SK-N-SH (cell line): ENCODE measurements at regions of chr7 and their contacts with region 1.

Region 1: GRCh38 chr7:157690833-157691585 is 354.2 kb downstream of the DNAJB6 start:
- DNase-seq: peak; percentile 99
- H3K4me3 ChIP-seq: peak overlapping the region; percentile 86 to 96; a peak in 2 of 4 replicates
- H3K27ac ChIP-seq: peak overlapping the region in 1 of 2 experiments; percentile 89; a peak in 2 of 4 replicates
- H3K4me1 ChIP-seq: peaks cover 0 to 17% of the 10 kb centered on the region in 2 experiments; a peak in 1 of 4 replicates
- H3K27me3 ChIP-seq: no peaks in the 10 kb centered on the region
- CTCF ChIP-seq: no peak
- EP300 ChIP-seq: no peak
- RAD21 ChIP-seq: no peak

Region 2: GRCh38 chr7:157679607-157680006 is 11.4 kb before region 1 on chr7:
- CTCF ChIA-PET with region 1: interaction called, 5 read pairs
- POLR2A ChIA-PET with region 1: interaction called, 10 read pairs
- DNase-seq: peak; percentile 30
- H3K4me3 ChIP-seq: no peak overlapping the region
- H3K27ac ChIP-seq: no peak overlapping the region
- H3K4me1 ChIP-seq: peaks cover 0 to 9% of the 10 kb centered on the region in 2 experiments; a peak in 2 of 4 replicates
- H3K27me3 ChIP-seq: no peaks in the 10 kb centered on the region
- CTCF ChIP-seq: no peak
- EP300 ChIP-seq: no peak
- RAD21 ChIP-seq: no peak

Region 3: DNA sequence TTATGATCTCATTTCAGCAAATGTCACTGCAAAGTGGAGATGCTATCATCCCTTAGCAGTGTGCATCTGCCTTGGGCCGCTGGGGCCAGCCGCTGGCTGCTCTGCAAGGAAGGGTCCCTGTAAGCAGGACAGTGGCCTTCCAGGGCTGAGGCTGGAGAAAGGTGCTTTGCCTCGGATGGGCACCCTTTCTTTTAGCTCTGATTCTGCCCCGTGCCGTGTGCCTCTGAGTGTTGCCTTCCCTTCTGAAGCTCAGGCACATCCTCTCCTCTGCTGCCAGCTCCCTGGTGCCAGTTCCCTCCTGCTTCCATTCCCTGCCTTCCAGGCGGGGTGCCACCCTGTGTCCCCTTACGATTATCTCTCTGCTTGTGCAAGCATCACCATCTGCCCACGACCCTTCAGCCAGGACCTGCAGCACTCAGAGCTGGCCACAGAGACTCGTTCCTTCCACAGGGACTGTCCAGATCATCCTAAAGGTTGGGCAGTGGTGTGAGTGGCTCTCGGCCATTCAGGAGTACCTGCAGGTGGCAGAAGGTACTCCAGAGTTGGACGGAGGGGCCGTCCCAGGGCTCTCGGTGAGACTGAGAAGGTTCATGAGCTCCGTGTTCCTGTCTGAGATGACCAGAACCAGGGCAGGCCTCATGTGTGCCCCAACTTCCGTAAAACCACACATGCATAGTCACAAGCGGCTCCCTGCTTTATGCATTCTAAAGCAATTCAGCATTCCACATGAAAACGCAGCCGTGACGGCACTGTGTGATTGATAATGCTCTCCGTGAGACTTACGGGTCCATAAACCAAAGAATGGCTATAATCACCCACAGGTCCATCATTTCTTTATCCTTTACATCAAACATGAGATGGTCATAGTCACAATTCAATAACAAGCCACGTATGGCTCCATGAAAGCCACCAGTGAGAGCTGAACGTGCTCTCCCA is 17.2 kb after region 1 on chr7:
- CTCF ChIA-PET with region 1: interaction called, 10 read pairs
- POLR2A ChIA-PET with region 1: interaction called, 5 read pairs
- DNase-seq: peak; percentile 80
- H3K4me3 ChIP-seq: no peak overlapping the region
- H3K27ac ChIP-seq: no peak overlapping the region; a peak in 1 of 4 replicates
- H3K4me1 ChIP-seq: peaks cover 0 to 18% of the 10 kb centered on the region in 2 experiments; a peak in 1 of 4 replicates
- H3K27me3 ChIP-seq: no peaks in the 10 kb centered on the region
- CTCF ChIP-seq: no peak
- EP300 ChIP-seq: no peak
- RAD21 ChIP-seq: no peak; the same call in 1 of the 2 replicates

Region 4: DNA sequence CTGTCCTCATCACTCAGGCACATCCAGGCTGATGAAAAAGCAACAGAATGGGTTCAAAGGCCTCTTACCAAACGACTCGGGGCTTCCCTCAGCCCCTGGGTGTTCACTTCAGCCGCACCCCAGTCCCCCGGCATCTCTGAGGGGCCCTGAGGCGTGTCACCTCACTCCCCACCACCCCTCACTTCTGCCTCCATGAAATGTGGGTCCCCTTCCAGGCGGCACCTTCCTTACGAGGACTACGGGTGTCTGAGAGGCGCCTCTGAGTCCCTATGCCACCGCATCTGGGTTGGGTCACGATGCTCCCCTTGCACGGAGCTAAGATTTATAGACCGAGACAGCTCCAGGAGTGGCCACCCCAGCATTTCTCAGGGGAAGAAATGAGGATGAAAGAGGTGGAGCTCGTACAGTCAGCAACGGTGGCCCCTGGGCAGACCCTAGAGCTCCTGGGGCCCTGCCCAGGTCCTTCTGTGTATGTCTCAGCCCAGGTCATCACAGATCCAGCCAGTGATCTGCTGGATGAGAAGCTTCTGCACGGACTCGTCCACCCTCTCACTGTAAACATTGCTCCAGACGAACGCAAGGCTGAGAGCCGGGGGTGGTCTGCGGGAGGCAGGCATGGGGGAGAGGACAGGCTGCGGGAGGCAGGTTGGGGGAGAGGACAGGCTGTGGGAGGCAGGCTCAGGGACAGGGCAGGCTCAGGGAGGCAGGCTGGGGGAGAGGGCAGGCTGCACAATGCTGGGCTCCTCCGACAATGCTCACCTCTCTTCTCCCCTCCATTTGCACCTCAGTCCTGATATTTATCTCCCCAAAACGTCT is 54.0 kb after region 1 on chr7:
- CTCF ChIA-PET with region 1: no interaction called
- POLR2A ChIA-PET with region 1: no interaction called
- DNase-seq: no peak
- H3K4me3 ChIP-seq: no peak overlapping the region
- H3K27ac ChIP-seq: no peak overlapping the region
- H3K4me1 ChIP-seq: no peaks in the 10 kb centered on the region
- H3K27me3 ChIP-seq: no peaks in the 10 kb centered on the region
- CTCF ChIP-seq: no peak
- EP300 ChIP-seq: no peak
- RAD21 ChIP-seq: no peak

Region 5: DNA sequence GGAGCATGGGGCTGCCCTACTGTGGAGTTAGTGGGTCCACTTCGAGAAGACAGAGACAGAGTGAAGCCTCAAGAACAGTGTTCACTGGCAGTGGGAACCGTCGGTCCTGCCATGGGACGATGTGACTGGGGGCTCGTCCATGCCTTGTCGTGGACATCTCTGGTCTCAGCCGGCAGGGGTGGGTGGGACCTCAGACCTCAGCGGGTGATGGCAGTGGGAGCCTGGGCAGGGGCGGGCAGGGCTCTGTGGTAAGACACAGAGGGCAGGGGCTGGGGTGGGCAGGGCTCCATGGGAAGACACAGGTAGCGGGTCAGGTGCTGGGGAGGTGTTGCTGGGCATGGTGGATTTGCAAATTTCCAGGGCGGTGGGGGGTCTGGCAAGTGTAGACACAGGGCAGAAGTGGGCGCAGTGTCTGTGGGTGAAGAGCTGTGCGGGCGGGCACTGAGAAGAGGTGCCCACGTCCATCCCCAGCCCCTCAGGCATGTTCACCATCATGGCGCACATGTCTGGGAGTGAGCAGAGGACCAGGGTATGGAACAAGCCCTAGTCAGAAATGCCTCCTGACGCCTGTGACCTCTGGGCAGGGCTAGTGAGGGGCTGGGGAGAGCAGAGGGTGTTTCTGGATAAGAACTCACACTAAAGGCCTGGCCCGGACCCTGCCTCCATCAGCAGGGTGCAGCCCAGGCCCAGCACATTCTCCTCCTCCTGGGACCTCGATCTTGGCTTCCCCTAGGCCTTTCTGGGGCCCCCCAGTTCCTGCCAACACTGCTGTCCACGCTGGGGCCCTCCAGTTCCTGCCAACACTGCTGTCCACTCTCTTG is 283.6 kb after region 1 on chr7:
- CTCF ChIA-PET with region 1: no interaction called
- POLR2A ChIA-PET with region 1: no interaction called
- DNase-seq: no peak
- H3K4me3 ChIP-seq: no peak overlapping the region; a peak in 1 of 4 replicates
- H3K27ac ChIP-seq: no peak overlapping the region
- H3K4me1 ChIP-seq: no peaks in the 10 kb centered on the region
- H3K27me3 ChIP-seq: no peaks in the 10 kb centered on the region
- CTCF ChIP-seq: no peak
- EP300 ChIP-seq: no peak
- RAD21 ChIP-seq: no peak